Naive thymus-derived CD4-positive, alpha-beta T cell (primary cell): ENCODE measurements at regions of chr1 and their contacts with region 1.

Region 1: GRCh38 chr1:150235852-150236613 is at the start of gene ANP32E:
- DNase-seq: peak; percentile 75 to 99 (median 98)
- ATAC-seq: peak; percentile 94
- H3K4me3 ChIP-seq: peak within 1 kb of the TSS; percentile 98
- H3K4me3 Mint-ChIP-seq: peak within 1 kb of the TSS in 3 of 10 donors; percentile 10 to 93 (median 60)
- H3K27ac ChIP-seq: peak within 1 kb of the TSS; percentile 97
- H3K27ac Mint-ChIP-seq: peak within 1 kb of the TSS in 4 of 9 donors; percentile 97 to 99 (median 98)
- H3K4me1 ChIP-seq: peaks cover 0 to 7% of the 10 kb centered on the region in 2 donors
- H3K4me1 Mint-ChIP-seq: peaks cover 11 to 22% (median 18%) of the 10 kb centered on the region in 7 donors
- H3K27me3 ChIP-seq: no peaks in the 10 kb centered on the region
- H3K27me3 Mint-ChIP-seq: peaks cover 0 to 4% (median 0%) of the 10 kb centered on the region in 5 donors
- total RNA-seq, gene ANP32E: 35.6 to 156 (median 44.8) TPM

Region 2: DNA sequence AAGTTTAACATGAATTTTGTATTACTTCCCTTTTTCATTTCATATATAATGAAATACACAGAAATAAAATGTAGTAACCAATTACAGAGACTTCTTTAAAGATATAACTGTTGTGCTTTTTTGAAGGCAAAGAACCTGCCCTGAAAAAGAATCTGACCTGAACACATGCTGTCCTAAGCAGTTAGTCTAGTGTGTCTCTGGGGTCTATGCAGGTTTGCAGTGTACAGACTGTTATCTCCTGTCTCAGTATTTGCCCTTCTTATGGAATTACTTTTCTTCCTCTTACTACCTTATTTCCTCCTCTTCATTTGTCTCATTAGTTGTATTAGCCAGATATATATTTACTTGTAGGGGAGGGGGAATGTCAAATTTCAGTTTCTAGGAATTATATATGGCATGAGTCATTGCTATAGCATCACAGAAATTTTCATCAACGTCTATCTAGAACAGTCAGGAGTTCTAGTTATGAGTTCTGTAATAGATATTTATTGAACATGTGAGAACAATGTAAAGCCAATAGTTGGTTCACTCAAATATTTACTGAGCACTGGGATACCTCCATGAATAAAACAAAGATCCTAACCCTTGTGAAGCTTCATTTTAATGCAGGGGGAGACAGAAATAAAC is 114.7 kb before region 1 on chr1:
- CTCF ChIA-PET with region 1: no interaction called
- POLR2A ChIA-PET with region 1: no interaction called
- intact Hi-C with region 1: no loop called
- DNase-seq: no peak
- ATAC-seq: no peak
- H3K4me3 ChIP-seq: no peak overlapping the region
- H3K4me3 Mint-ChIP-seq: no peak overlapping the region
- H3K27ac ChIP-seq: no peak overlapping the region
- H3K27ac Mint-ChIP-seq: peak overlapping the region in 1 of 9 donors; percentile 17
- H3K4me1 ChIP-seq: peaks cover 0 to 5% of the 10 kb centered on the region in 2 donors
- H3K4me1 Mint-ChIP-seq: peaks cover 0 to 8% (median 3%) of the 10 kb centered on the region in 7 donors
- H3K27me3 ChIP-seq: no peaks in the 10 kb centered on the region
- H3K27me3 Mint-ChIP-seq: no peaks in the 10 kb centered on the region

Region 3: DNA sequence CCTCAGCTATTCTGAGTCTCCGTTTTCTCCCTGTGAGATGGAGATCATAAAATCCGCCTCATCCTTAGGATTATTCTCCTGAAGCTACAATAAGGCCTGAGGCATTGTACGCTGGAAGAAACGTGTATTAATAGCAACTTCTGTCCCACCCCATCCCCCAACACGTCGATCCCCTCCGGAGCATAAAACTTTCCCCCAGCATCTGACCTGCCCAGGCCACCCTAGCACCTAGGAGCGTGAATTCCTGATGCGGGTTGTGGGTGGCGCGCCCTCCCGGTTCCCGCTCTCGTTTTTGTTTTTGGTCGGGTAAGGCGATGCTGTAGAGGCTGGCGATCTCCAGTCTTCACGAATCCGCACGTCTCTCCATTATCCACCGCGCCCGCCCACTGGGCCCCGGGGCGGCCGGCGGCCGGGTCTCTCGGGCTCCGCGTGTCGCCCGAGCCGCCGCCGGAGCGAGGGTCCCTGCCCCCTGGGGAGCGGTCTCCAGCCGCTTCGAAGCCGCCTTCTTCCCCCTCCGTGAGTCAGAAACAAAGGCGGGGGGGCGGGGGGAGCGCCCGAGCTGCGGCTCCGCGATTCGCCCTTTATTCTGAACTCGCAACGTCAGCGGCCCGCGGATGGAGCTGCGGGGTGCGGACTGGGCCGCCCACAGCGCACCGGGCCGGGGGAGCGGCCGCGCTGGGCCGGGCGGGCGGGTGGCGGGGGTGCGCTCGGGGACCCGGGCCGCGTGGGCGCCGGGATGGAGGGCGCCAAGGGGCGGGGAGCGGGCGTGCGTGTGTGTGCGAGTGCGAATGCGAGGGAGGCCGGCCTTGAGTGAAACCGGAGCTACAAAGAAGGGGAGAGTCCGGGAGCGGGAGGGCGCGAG is 86.5 kb before region 1 on chr1 and contains the start of gene PLEKHO1:
- CTCF ChIA-PET with region 1: no interaction called
- POLR2A ChIA-PET with region 1: interaction called, 5 read pairs
- intact Hi-C with region 1: loop called in 1 of 2 experiments (anchors 2 kb)
- DNase-seq: peak; percentile 53 to 84 (median 65)
- ATAC-seq: peak; percentile 86
- H3K4me3 ChIP-seq: peak within 1 kb of the TSS; percentile 89
- H3K4me3 Mint-ChIP-seq: peak within 1 kb of the TSS; percentile 89 to 99 (median 96)
- H3K27ac ChIP-seq: peak within 1 kb of the TSS; percentile 77
- H3K27ac Mint-ChIP-seq: peak within 1 kb of the TSS; percentile 87 to 99 (median 97)
- H3K4me1 ChIP-seq: peaks cover 21 to 38% of the 10 kb centered on the region in 2 donors
- H3K4me1 Mint-ChIP-seq: peaks cover 42 to 79% (median 74%) of the 10 kb centered on the region in 7 donors
- H3K27me3 ChIP-seq: no peaks in the 10 kb centered on the region
- H3K27me3 Mint-ChIP-seq: peaks cover 0 to 26% (median 0%) of the 10 kb centered on the region in 5 donors
- total RNA-seq, gene PLEKHO1: 64.9 to 111 (median 94.1) TPM

Region 4: DNA sequence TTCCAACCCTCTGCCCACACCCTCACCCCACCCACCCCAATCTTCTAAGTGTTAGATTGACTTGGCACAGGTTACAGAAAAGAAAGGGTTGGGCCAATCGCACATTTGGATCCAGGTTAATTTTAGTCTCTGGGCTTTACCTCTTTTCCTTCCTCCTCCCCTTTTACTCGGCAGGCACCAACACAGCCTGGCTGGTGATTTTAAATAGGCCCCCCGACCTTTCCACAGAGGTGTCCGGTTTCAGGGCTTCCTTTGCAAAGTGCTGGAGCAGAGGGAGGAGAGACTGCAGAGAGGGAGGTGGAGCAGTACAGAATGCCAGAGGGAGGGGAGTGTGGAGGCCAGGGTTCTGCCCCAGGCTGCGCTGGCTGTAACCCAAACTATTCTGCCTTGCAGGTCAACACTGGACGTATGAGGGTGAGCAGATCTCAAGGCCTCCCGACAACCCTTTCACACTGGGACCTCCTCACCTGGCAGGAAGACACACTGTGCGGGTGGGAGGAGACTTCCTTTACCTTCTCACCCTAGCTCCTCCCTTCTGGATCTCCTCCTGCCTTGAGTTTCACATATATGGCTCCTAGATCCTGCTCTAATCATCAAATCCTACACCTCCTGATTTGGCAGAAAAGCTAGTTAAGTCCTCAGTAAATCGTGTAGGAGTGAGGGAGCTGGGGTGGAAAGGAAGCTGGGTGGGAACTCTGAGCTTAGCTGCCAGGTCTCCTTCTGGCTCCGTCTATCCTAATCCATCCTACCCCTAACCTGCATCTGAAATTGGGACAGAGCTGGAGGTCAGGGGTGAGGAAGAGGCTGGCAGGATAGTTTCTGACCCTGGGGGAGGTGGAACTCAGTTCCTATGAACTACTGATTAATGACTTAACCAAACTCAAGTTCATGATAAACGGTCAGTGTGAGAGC is 24.0 kb after region 1 on chr1:
- CTCF ChIA-PET with region 1: interaction called, 4 read pairs
- POLR2A ChIA-PET with region 1: interaction called, 6 read pairs
- intact Hi-C with region 1: loop called in 1 of 2 experiments (anchors 1 kb)
- DNase-seq: no peak
- ATAC-seq: no peak
- H3K4me3 ChIP-seq: no peak overlapping the region
- H3K4me3 Mint-ChIP-seq: peak overlapping the region in 1 of 10 donors; percentile 32
- H3K27ac ChIP-seq: no peak overlapping the region
- H3K27ac Mint-ChIP-seq: no peak overlapping the region
- H3K4me1 ChIP-seq: peaks cover 6 to 8% of the 10 kb centered on the region in 2 donors
- H3K4me1 Mint-ChIP-seq: peaks cover 6 to 23% (median 15%) of the 10 kb centered on the region in 7 donors
- H3K27me3 ChIP-seq: peaks cover 0 to 10% of the 10 kb centered on the region in 2 donors
- H3K27me3 Mint-ChIP-seq: peaks cover 13 to 49% (median 26%) of the 10 kb centered on the region in 5 donors

Region 5: GRCh38 chr1:150281837-150282653 is 46.0 kb after region 1 on chr1 and contains the start of gene CIART:
- CTCF ChIA-PET with region 1: no interaction called
- POLR2A ChIA-PET with region 1: interaction called, 4 read pairs
- intact Hi-C with region 1: loop called (anchors 1 kb)
- DNase-seq: peak; percentile 34 to 88 (median 82)
- ATAC-seq: peak; percentile 95
- H3K4me3 ChIP-seq: peak within 1 kb of the TSS; percentile 58
- H3K4me3 Mint-ChIP-seq: peak within 1 kb of the TSS; percentile 84 to 98 (median 94)
- H3K27ac ChIP-seq: peak within 1 kb of the TSS; percentile 52
- H3K27ac Mint-ChIP-seq: peak within 1 kb of the TSS; percentile 80 to 98 (median 91)
- H3K4me1 ChIP-seq: peaks cover 11 to 23% of the 10 kb centered on the region in 2 donors
- H3K4me1 Mint-ChIP-seq: peaks cover 20 to 36% (median 32%) of the 10 kb centered on the region in 7 donors
- H3K27me3 ChIP-seq: no peaks in the 10 kb centered on the region
- H3K27me3 Mint-ChIP-seq: peaks cover 0 to 13% (median 0%) of the 10 kb centered on the region in 5 donors
- total RNA-seq, gene CIART: 1.4 to 2.6 (median 2.4) TPM

Region 6: GRCh38 chr1:150456146-150456647 is 220.2 kb after region 1 on chr1:
- CTCF ChIA-PET with region 1: no interaction called
- POLR2A ChIA-PET with region 1: no interaction called
- intact Hi-C with region 1: loop called in 1 of 2 experiments (anchors 10 kb)
- DNase-seq: no peak
- ATAC-seq: no peak
- H3K4me3 ChIP-seq: no peak overlapping the region
- H3K4me3 Mint-ChIP-seq: no peak overlapping the region
- H3K27ac ChIP-seq: no peak overlapping the region
- H3K27ac Mint-ChIP-seq: peak overlapping the region in 3 of 9 donors; percentile 5 to 22 (median 20)
- H3K4me1 ChIP-seq: no peaks in the 10 kb centered on the region
- H3K4me1 Mint-ChIP-seq: peaks cover 0 to 9% (median 4%) of the 10 kb centered on the region in 7 donors
- H3K27me3 ChIP-seq: no peaks in the 10 kb centered on the region
- H3K27me3 Mint-ChIP-seq: no peaks in the 10 kb centered on the region

Region 7: DNA sequence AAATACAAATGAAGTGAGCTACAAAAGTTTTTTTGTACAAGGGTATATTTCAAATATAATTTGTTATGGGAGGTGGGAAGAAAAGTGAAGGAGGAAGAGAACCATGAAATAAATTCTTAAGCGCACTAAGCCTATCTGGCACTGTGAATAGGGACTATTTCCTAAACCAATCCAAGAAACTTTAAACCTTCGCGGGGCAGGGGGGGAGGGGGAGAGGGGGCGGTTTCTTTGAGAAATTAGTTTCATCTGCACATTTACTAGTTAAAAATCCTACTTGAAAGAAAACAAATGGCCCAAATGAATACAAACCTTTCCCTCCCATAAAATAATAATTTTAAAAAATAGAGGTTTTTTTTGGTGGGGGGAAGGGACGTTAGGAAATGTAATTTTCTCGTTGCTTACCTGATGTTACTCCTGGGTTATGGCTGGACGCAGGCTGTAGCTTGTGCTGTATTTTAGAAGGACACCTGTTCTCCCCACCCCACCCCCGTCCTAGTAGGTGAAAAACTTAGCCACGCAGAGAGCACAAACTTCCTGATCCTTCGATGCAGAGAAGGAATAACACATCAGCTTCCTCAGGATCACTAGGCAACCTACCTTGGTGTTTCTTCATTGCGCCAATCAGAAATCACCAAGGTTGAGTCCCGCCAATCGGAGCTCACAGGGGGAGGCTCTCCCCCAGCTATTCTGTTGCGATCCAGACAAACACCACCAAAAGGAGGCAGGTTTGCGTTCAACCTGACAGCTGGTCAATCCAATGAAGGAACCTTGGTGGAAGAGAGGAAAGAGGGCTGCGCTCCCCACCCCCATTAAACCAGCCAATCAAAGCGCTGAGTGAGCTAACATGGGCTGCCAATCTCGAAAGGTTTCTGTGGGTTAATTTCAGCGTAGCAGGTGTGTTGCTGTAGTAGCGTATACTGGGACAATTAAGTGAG is 460.8 kb after region 1 on chr1 and contains the start of gene GOLPH3L:
- CTCF ChIA-PET with region 1: no interaction called
- POLR2A ChIA-PET with region 1: interaction called, 3 read pairs
- intact Hi-C with region 1: loop called in 1 of 2 experiments (anchors 2 kb)
- DNase-seq: peak; percentile 46 to 95 (median 92)
- ATAC-seq: peak; percentile 100
- H3K4me3 ChIP-seq: peak within 1 kb of the TSS; percentile 73
- H3K4me3 Mint-ChIP-seq: peak within 1 kb of the TSS; percentile 91 to 100 (median 98)
- H3K27ac ChIP-seq: peak within 1 kb of the TSS; percentile 82
- H3K27ac Mint-ChIP-seq: peak within 1 kb of the TSS; percentile 81 to 99 (median 95)
- H3K4me1 ChIP-seq: peaks cover 4 to 11% of the 10 kb centered on the region in 2 donors
- H3K4me1 Mint-ChIP-seq: peaks cover 13 to 49% (median 42%) of the 10 kb centered on the region in 7 donors
- H3K27me3 ChIP-seq: no peaks in the 10 kb centered on the region
- H3K27me3 Mint-ChIP-seq: peaks cover 0 to 12% (median 0%) of the 10 kb centered on the region in 5 donors
- total RNA-seq, gene GOLPH3L: 8.7 to 32.1 (median 23.6) TPM

Region 8: DNA sequence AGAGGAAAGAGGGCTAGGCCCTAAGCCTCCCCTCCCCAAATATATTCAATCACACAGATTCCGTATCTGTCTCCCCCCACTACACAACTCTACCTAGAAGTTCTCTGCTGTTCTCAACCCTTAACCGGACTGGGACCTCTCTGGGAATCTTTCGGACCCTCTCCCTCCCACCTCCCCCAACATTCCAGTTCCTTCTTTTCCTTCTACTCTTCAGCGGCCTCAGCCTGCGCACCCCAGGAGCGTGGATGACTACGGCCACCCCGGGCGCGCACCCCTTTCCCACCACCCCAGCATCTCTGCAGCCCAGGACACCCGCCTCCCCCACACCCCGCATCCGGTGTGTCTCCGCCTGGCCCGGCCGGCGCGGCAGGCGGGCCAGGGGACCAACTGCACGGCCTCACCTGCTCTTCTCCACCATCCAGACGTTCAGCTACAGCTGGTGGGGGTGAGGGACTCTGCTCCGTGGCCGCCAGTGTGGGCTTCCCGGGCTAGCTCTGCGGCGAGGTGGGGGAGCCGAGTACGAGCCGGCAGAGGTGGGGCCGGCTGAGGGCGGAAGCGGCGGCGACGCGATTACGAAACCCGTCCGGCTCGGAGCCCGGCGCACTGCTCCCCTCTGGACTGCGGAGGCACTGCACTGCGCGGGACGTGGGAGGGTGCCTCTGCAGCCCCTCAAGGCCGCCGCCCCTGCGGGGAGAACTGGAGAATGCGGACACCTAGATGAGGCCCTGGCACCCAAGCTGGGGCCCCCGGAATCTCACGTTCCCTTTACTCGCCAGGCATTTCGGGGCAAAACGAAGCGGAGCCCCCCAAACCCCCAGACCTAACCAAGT is 823.3 kb after region 1 on chr1 and contains the start of gene CDC42SE1:
- CTCF ChIA-PET with region 1: no interaction called
- POLR2A ChIA-PET with region 1: no interaction called
- intact Hi-C with region 1: loop called in 1 of 2 experiments (anchors 2 kb)
- DNase-seq: peak; percentile 76 to 85 (median 82)
- ATAC-seq: peak; percentile 84
- H3K4me3 ChIP-seq: peak within 1 kb of the TSS; percentile 82
- H3K4me3 Mint-ChIP-seq: peak within 1 kb of the TSS; percentile 95 to 100 (median 99)
- H3K27ac ChIP-seq: peak within 1 kb of the TSS; percentile 99
- H3K27ac Mint-ChIP-seq: peak within 1 kb of the TSS; percentile 93 to 99 (median 95)
- H3K4me1 ChIP-seq: peaks cover 11 to 26% of the 10 kb centered on the region in 2 donors
- H3K4me1 Mint-ChIP-seq: peaks cover 35 to 55% (median 41%) of the 10 kb centered on the region in 7 donors
- H3K27me3 ChIP-seq: no peaks in the 10 kb centered on the region
- H3K27me3 Mint-ChIP-seq: no peaks in the 10 kb centered on the region
- total RNA-seq, gene CDC42SE1: 362 to 516 (median 425) TPM

Region 9: DNA sequence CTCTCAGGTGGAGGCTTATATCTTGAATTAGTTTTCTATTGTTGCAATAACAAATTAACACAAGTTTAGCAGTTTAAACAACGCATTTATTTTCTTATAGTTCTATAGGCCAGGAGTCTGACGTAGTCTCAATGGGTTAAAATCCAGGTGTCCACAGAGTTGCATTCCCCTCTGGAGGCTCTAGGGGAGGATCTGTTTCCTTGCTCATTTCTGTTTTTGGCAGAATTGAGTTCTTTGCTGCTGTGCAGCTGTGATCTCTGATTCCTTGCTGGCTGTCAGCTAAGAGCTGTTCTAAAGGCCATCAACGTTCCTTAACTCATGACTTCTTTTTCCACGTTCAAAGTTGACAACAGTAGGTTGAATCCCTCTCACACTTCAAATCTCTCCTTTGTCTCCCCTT is 1725.8 kb after region 1 on chr1:
- CTCF ChIA-PET with region 1: no interaction called
- POLR2A ChIA-PET with region 1: no interaction called
- intact Hi-C with region 1: no loop called
- DNase-seq: no peak
- ATAC-seq: no peak
- H3K4me3 ChIP-seq: no peak overlapping the region
- H3K4me3 Mint-ChIP-seq: no peak overlapping the region
- H3K27ac ChIP-seq: no peak overlapping the region
- H3K27ac Mint-ChIP-seq: no peak overlapping the region
- H3K4me1 ChIP-seq: no peaks in the 10 kb centered on the region
- H3K4me1 Mint-ChIP-seq: peaks cover 0 to 9% (median 5%) of the 10 kb centered on the region in 7 donors
- H3K27me3 ChIP-seq: no peaks in the 10 kb centered on the region
- H3K27me3 Mint-ChIP-seq: peaks cover 0 to 14% (median 0%) of the 10 kb centered on the region in 5 donors